Breast epithelium (tissue), 4 donors: ENCODE measurements at regions of chr10 and their contacts with region 1.

Region 1: GRCh38 chr10:55550241-55550640 is 749.2 kb upstream of the PCDH15 start:
- DNase-seq: no peak
- H3K4me3 ChIP-seq: no peak overlapping the region
- H3K27ac ChIP-seq: no peak overlapping the region
- H3K4me1 ChIP-seq: no peaks in the 10 kb centered on the region
- H3K27me3 ChIP-seq: no peaks in the 10 kb centered on the region
- CTCF ChIP-seq: no peak
- POLR2A ChIP-seq: no peak

Region 2: GRCh38 chr10:54702583-54703485 is 847.4 kb before region 1 on chr10:
- intact Hi-C with region 1: loop called (anchors 5 kb)
- DNase-seq: no peak
- H3K4me3 ChIP-seq: no peak overlapping the region
- H3K27ac ChIP-seq: no peak overlapping the region
- H3K4me1 ChIP-seq: no peaks in the 10 kb centered on the region
- H3K27me3 ChIP-seq: no peaks in the 10 kb centered on the region
- CTCF ChIP-seq: no peak
- POLR2A ChIP-seq: no peak